Sigmoid colon (tissue), 7 donors: ENCODE measurements at regions of chr15 and their contacts with region 1.

Region 1: GRCh38 chr15:72199711-72200212 is 2.2 kb upstream of the GRAMD2A start:
- DNase-seq: peak; percentile 85
- H3K4me3 ChIP-seq: no peak overlapping the region
- H3K27ac ChIP-seq: peak overlapping the region in 1 of 4 donors; percentile 41
- H3K4me1 ChIP-seq: peaks cover 0 to 25% (median 24%) of the 10 kb centered on the region in 4 donors
- H3K27me3 ChIP-seq: peaks cover 0 to 36% (median 16%) of the 10 kb centered on the region in 3 donors
- CTCF ChIP-seq: peak; percentile 57 to 91 (median 90)
- EP300 ChIP-seq: no peak
- POLR2A ChIP-seq: no peak

Region 2: GRCh38 chr15:72231066-72231846 is 31.5 kb after region 1 on chr15 and contains the start of gene PKM:
- intact Hi-C with region 1: loop called (anchors 2 kb)
- DNase-seq: peak; percentile 97
- H3K4me3 ChIP-seq: peak within 1 kb of the TSS; percentile 47 to 90 (median 68)
- H3K27ac ChIP-seq: peak within 1 kb of the TSS; percentile 92 to 99 (median 96)
- H3K4me1 ChIP-seq: peaks cover 0 to 48% (median 42%) of the 10 kb centered on the region in 4 donors
- H3K27me3 ChIP-seq: no peaks in the 10 kb centered on the region
- CTCF ChIP-seq: no peak
- EP300 ChIP-seq: no peak
- POLR2A ChIP-seq: peak; percentile 93 to 95
- total RNA-seq, gene PKM: 135 to 213 (median 200) TPM

Region 3: GRCh38 chr15:72285927-72286516 is 86.3 kb after region 1 on chr15:
- intact Hi-C with region 1: loop called (anchors 5 kb)
- DNase-seq: no peak
- H3K4me3 ChIP-seq: no peak overlapping the region
- H3K27ac ChIP-seq: no peak overlapping the region
- H3K4me1 ChIP-seq: no peaks in the 10 kb centered on the region
- H3K27me3 ChIP-seq: no peaks in the 10 kb centered on the region
- CTCF ChIP-seq: peak in 3 of 4 experiments; percentile 13 to 55 (median 23)
- EP300 ChIP-seq: no peak
- POLR2A ChIP-seq: no peak